ENCODE measurements at regions of chr11 and their contacts with region 1.

Region 1: GRCh38 chr11:62694455-62695167 is 5.3 kb upstream of the LRRN4CL start:
- DNase-seq: peak; percentile 49 to 91
- H3K4me3 ChIP-seq: no peak overlapping the region
- H3K27ac ChIP-seq: no peak overlapping the region
- H3K4me1 ChIP-seq: no peaks in the 10 kb centered on the region
- H3K27me3 ChIP-seq: no peaks in the 10 kb centered on the region
- CTCF ChIP-seq: peak; percentile 60 to 87 (median 79)

Region 2: GRCh38 chr11:62383822-62384221 is 310.8 kb before region 1 on chr11:
- intact Hi-C with region 1: loop called (anchors 2 kb)
- DNase-seq: no peak
- H3K4me3 ChIP-seq: no peak overlapping the region
- H3K27ac ChIP-seq: no peak overlapping the region
- H3K4me1 ChIP-seq: peaks cover 0 to 5% of the 10 kb centered on the region in 2 donors
- H3K27me3 ChIP-seq: no peaks in the 10 kb centered on the region
- CTCF ChIP-seq: no peak

Region 3: GRCh38 chr11:62394825-62395538 is 299.6 kb before region 1 on chr11:
- intact Hi-C with region 1: loop called (anchors 1 kb)
- DNase-seq: peak; percentile 24 to 89
- H3K4me3 ChIP-seq: peak overlapping the region; percentile 44 to 58
- H3K27ac ChIP-seq: peak overlapping the region; percentile 56 to 58
- H3K4me1 ChIP-seq: peaks cover 20 to 27% of the 10 kb centered on the region in 2 donors
- H3K27me3 ChIP-seq: no peaks in the 10 kb centered on the region
- CTCF ChIP-seq: peak; percentile 67 to 77 (median 69)

Region 4: DNA sequence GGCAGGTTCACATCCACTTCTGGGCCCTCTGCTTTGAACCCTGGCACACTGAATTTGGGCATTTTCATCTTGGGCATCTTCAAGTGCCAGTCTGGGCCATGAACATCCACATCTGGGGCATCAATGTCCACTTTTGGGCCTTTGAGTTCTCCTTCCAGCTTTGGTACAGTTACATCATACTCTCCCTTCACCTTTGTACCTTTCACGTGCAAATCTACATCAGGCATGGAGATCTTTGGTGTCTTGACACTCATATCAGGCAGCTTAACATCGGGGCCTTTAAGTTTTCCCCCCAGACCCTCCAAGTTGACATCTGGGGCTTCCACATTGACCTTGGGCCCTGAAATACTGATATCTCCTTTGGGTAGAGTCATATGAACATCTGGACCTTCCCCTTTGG is 162.5 kb before region 1 on chr11:
- intact Hi-C with region 1: no loop called
- DNase-seq: no peak
- H3K4me3 ChIP-seq: no peak overlapping the region
- H3K27ac ChIP-seq: no peak overlapping the region
- H3K4me1 ChIP-seq: peaks cover 7 to 15% of the 10 kb centered on the region in 2 donors
- H3K27me3 ChIP-seq: no peaks in the 10 kb centered on the region
- CTCF ChIP-seq: no peak

Region 5: DNA sequence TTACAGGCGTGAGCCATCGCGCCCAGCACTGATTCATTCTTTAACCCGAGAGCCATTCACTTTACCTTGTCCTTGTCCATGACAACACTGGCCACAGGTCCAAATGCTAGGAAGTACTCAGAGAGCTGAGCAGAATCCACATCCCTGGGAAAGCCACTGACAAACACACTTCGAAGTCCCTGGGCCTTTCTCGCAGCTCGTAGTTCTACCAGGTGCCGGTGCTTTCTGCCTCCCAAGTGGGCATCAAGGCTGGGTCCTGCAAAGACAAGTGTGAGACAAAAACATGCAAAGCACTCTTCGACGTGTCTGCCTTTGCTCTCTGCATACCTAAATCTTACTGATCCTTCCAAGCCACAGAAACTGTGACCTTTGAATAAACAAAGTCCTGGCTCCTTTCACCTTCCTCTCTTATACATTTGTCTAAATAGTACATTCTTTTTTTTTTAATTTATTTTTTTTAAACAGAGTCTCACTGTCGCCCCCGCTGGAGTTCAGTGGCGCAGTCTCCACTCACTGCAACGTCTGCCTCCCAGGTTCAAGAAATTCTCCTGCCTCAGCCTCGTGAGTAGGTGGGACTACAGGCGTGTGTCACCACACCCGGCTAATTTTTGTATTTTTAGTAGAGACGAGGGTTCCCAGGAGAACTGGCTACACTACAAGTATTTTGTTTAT is 105.5 kb before region 1 on chr11:
- intact Hi-C with region 1: no loop called
- DNase-seq: no peak
- H3K4me3 ChIP-seq: no peak overlapping the region
- H3K27ac ChIP-seq: no peak overlapping the region
- H3K4me1 ChIP-seq: peaks cover 10 to 20% of the 10 kb centered on the region in 2 donors
- H3K27me3 ChIP-seq: no peaks in the 10 kb centered on the region
- CTCF ChIP-seq: no peak

Region 6: DNA sequence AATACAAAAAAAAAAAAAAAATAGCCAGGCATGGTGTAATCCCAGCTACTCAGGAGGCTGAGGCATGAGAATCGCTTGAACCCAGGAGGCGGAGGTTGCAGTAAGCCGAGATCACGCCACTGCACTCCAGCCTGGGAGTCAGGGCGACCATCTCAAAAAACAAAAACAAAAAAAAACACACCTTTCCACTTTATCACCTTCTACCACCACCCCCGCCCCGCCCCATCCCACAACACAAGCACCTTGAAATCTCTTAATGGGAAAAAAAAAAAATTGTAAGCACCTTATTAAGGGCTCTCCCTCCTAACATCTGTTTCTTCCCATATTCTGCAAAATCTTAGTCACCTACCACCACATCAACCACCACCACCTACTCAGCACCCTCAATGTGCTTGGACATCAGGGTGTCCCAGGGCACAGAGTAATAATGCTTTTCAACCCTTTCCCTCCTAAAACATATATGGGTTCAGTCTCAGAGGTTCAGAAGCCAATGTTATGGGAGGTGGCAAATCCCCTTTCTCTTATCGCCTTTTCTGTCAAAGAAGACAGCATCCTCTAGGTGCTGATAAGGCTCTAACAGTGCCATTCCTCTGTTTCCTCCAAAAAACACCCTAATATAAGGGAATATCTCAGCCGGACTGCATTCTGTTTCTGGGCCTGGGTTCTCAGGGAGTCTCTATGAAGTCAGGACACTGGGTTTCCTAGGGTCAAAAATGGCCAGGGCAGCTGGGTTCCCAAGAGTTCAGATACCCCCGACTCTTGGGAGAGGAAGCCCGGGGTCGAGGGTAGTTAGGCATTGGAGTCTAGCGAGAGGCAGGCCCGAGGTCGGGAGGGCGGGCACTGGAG is 42.2 kb before region 1 on chr11:
- intact Hi-C with region 1: loop called (anchors 2 kb)
- DNase-seq: no peak
- H3K4me3 ChIP-seq: peak overlapping the region; percentile 78 to 96
- H3K27ac ChIP-seq: peak overlapping the region; percentile 93 to 94
- H3K4me1 ChIP-seq: peaks cover 0 to 15% of the 10 kb centered on the region in 2 donors
- H3K27me3 ChIP-seq: no peaks in the 10 kb centered on the region
- CTCF ChIP-seq: no peak